ENCODE measurements at regions of chr13 and their contacts with region 1.

Region 1: GRCh38 chr13:46288570-46289259 is 77.0 kb downstream of the LRRC63 start:
- DNase-seq: peak; percentile 38
- H3K4me3 ChIP-seq: no peak overlapping the region
- H3K27ac ChIP-seq: no peak overlapping the region
- H3K4me1 ChIP-seq: no peaks in the 10 kb centered on the region
- H3K27me3 ChIP-seq: peaks cover 5% of the 10 kb centered on the region
- CTCF ChIP-seq: peak; percentile 74 to 84

Region 2: DNA sequence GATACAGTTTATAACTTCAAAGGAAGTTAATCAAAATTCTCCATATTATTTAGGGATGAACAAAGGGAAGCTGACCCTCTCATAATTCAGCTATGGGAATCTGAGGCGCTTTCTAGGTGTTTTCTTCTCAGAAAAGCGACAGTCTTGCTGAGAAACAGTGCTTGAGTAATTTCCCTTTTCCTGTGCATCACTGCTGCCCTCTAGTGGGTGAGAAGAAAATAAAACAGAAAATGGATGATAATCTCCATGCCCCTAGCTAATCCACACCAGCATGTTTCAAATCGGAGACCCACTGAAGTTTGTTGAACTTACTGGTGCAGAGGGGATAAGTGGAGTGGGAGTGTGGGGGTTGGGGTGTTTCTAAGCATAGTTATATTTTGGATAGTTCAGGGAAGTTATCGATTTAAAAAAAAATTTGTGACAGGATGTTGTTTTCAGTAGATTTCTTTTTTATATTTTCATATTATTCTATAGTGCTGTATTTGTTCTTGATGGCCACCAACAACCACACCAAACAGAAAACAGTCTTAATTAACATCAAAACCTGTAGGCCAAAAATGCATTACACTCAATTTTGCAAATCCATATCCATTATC is 128.1 kb before region 1 on chr13:
- CTCF ChIA-PET with region 1: interaction called, 3 read pairs
- dilution Hi-C with region 1: no loop called
- in situ Hi-C with region 1: no loop called
- intact Hi-C with region 1: loop called (anchors 1 kb)
- DNase-seq: peak; percentile 36
- H3K4me3 ChIP-seq: no peak overlapping the region
- H3K27ac ChIP-seq: no peak overlapping the region
- H3K4me1 ChIP-seq: no peaks in the 10 kb centered on the region
- H3K27me3 ChIP-seq: peaks cover 4% of the 10 kb centered on the region
- CTCF ChIP-seq: peak; percentile 77 to 80